ENCODE measurements at regions of chr12 and their contacts with region 1.

Region 1: DNA sequence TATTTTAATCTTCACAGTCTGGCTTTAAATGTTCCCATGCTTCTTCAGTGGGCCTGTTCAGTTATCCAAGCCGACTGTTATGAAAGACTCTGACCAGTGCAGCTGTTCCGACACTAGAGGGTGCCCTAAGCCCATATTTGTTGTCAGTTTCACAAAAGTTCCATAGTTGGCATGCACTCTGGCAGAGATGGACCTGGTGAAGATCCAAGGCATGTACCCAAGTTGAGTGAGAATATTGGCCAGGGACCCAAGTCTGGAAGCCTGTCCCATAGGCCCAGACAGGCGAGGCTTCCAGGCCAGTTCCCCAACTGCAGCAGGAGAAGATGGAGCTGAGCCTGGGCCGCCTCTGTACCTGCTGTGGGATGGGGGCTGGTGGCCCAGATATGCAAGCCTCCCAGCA is 27.4 kb upstream of the GUCY2C start:
- DNase-seq: peak; percentile 47 to 66
- H3K4me3 ChIP-seq: no peak overlapping the region
- H3K4me3 Mint-ChIP-seq: no peak overlapping the region
- H3K27ac Mint-ChIP-seq: no peak overlapping the region
- H3K4me1 ChIP-seq: no peaks in the 10 kb centered on the region
- H3K4me1 Mint-ChIP-seq: no peaks in the 10 kb centered on the region
- H3K27me3 ChIP-seq: no peaks in the 10 kb centered on the region
- H3K27me3 Mint-ChIP-seq: no peaks in the 10 kb centered on the region
- CTCF ChIP-seq: peak; percentile 59 to 65

Region 2: GRCh38 chr12:14776236-14776961 is 52.6 kb after region 1 on chr12:
- CTCF ChIA-PET with region 1: no interaction called
- POLR2A ChIA-PET with region 1: no interaction called
- intact Hi-C with region 1: no loop called
- DNase-seq: no peak
- H3K4me3 ChIP-seq: no peak overlapping the region; the same call in 1 of the 2 replicates
- H3K4me3 Mint-ChIP-seq: peak overlapping the region; percentile 93
- H3K27ac Mint-ChIP-seq: peak overlapping the region; percentile 97
- H3K4me1 ChIP-seq: peaks cover 30% of the 10 kb centered on the region
- H3K4me1 Mint-ChIP-seq: peaks cover 42% of the 10 kb centered on the region
- H3K27me3 ChIP-seq: no peaks in the 10 kb centered on the region
- H3K27me3 Mint-ChIP-seq: no peaks in the 10 kb centered on the region
- CTCF ChIP-seq: peak; percentile 21 to 26

Region 3: DNA sequence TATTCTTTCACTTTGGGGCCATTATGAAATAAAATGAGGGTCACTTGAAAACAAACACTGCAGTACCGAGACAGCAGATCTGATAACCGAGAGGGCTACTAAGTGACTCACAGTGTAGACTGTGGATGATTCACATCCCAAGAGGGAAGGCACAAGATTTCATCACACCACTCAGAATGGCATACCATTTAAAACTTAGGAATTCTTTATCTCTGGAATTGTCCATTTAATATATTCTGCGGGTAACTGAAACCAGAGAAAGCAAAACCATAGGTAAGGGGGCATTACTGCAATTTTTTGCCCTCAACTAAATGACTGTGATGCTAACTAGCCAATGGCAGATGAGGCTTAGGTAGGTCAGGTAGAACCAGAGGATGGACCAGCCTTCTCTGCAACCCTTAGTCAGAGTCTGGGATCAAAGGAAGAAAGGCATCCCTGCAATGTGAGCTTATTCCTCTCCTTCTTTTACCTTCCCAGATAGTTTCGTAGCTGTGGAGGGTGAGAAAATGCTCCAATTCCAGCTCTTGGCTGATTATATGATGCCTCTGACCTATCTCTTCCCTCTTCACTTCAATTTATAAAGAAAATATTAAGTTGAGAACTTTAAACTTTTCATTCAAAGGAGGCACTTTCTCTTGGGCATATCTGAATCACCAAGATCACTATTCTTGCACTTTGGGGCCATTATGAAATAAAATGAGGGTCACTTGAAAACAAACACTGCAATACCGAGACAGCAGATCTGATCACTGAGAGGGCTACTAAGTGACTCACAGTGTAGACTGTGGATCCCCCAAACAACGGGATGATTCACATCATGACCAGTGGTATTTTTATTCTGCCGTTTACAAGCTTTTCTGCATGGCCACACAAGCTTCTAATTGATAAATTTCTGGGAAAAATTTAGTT is 112.8 kb after region 1 on chr12:
- CTCF ChIA-PET with region 1: no interaction called
- POLR2A ChIA-PET with region 1: no interaction called
- intact Hi-C with region 1: no loop called
- DNase-seq: peak in 1 of 2 experiments; percentile 33
- H3K4me3 ChIP-seq: no peak overlapping the region
- H3K4me3 Mint-ChIP-seq: peak overlapping the region; percentile 37
- H3K27ac Mint-ChIP-seq: peak overlapping the region; percentile 75
- H3K4me1 ChIP-seq: peaks cover 30% of the 10 kb centered on the region
- H3K4me1 Mint-ChIP-seq: peaks cover 12% of the 10 kb centered on the region
- H3K27me3 ChIP-seq: no peaks in the 10 kb centered on the region
- H3K27me3 Mint-ChIP-seq: peaks cover 5% of the 10 kb centered on the region
- CTCF ChIP-seq: no peak

Region 4: DNA sequence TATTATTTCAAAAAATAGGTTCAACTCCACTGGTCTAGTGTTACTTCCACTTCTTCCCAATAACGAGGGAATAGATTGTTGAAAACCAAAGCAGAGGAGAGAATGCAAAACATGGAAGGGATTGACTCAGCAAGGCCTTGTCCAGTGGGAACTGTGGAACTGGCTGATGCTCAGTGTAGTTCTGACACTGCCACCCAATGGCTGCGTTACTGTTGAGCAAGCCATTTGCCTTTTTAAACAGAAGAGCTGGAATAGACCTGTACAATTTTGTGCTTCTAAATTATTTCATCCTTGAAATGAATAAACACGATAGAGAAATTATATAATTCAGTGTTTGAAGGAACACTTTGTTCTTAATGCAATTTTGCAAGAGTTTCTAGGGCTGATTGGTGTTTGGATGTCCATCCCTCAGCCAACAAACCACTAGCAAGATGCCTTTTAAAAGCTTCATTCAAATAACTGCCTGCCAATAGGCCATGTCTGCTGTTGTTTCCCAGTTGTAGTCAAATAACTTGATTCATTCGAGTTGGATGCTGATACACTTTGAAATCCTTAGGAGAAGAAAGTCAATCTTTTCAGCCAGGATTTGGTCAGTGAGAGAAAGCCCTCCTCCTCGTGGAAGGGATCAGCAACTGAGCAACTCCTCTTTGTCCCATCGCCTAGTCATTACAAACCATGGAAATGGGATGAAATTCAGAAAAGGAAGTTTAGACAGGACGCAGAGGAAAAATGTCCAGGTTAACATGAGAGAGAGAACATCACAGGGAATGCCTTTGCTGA is 169.2 kb after region 1 on chr12:
- CTCF ChIA-PET with region 1: no interaction called
- POLR2A ChIA-PET with region 1: no interaction called
- intact Hi-C with region 1: loop called (anchors 2 kb)
- DNase-seq: peak in 1 of 2 experiments; percentile 18
- H3K4me3 ChIP-seq: no peak overlapping the region
- H3K4me3 Mint-ChIP-seq: no peak overlapping the region
- H3K27ac Mint-ChIP-seq: no peak overlapping the region
- H3K4me1 ChIP-seq: no peaks in the 10 kb centered on the region
- H3K4me1 Mint-ChIP-seq: no peaks in the 10 kb centered on the region
- H3K27me3 ChIP-seq: no peaks in the 10 kb centered on the region
- H3K27me3 Mint-ChIP-seq: peaks cover 7% of the 10 kb centered on the region
- CTCF ChIP-seq: peak in 1 of 2 experiments; percentile 19

Region 5: GRCh38 chr12:14995583-14996425 is 272.0 kb after region 1 on chr12:
- CTCF ChIA-PET with region 1: no interaction called
- POLR2A ChIA-PET with region 1: no interaction called
- intact Hi-C with region 1: loop called (anchors 1 kb)
- DNase-seq: peak in 1 of 2 experiments; percentile 46
- H3K4me3 ChIP-seq: no peak overlapping the region
- H3K4me3 Mint-ChIP-seq: no peak overlapping the region
- H3K27ac Mint-ChIP-seq: no peak overlapping the region
- H3K4me1 ChIP-seq: 0 out of 2 replicates have a peak, but pooled peaks cover 4% of the 10 kb centered on the region
- H3K4me1 Mint-ChIP-seq: peaks cover 7% of the 10 kb centered on the region
- H3K27me3 ChIP-seq: no peaks in the 10 kb centered on the region
- H3K27me3 Mint-ChIP-seq: peaks cover 14% of the 10 kb centered on the region
- CTCF ChIP-seq: peak; percentile 69 to 74

Region 6: GRCh38 chr12:15268927-15269552 is 545.3 kb after region 1 on chr12:
- CTCF ChIA-PET with region 1: interaction called, 4 read pairs
- POLR2A ChIA-PET with region 1: no interaction called
- intact Hi-C with region 1: loop called (anchors 1 kb)
- DNase-seq: peak; percentile 71 to 72
- H3K4me3 ChIP-seq: no peak overlapping the region
- H3K4me3 Mint-ChIP-seq: no peak overlapping the region
- H3K27ac Mint-ChIP-seq: no peak overlapping the region
- H3K4me1 ChIP-seq: no peaks in the 10 kb centered on the region
- H3K4me1 Mint-ChIP-seq: no peaks in the 10 kb centered on the region
- H3K27me3 ChIP-seq: no peaks in the 10 kb centered on the region
- H3K27me3 Mint-ChIP-seq: no peaks in the 10 kb centered on the region
- CTCF ChIP-seq: peak; percentile 87 to 96